ENCODE measurements at regions of chr3 and their contacts with region 1.

Region 1: DNA sequence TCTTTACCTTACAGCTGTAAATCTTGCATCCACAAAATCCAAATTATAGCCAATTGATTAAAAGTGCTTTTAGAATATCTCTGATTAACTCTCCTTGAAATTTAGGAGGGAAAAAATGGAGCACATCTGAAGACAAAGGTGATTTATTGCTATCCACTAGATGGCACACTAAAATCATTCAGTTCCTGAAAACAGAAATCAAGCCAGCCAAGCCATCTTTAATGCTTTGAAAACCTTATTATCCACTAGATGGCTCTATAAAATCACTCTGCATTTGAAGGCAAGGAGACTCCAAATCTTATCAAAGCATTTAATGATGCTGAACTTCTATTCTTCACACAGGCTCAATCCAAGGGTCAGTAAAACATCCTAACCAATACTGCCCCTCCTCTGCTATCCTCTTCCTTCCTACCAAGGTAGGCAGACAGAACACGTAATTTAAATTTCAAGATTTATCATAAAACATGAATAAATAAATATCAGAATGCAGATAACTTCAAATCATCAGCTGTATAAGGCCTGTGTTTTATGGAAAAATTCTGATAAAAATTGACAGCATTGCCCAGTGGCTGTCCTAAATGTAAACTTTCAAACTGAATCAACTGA is 48.4 kb downstream of the GOLIM4 start:
- DNase-seq: peak; percentile 89
- H3K4me3 ChIP-seq: no peak overlapping the region
- H3K27ac ChIP-seq: no peak overlapping the region
- H3K4me1 ChIP-seq: peaks cover 7% of the 10 kb centered on the region
- CTCF ChIP-seq: peak; percentile 100

Region 2: GRCh38 chr3:167941234-167941995 is 105.9 kb before region 1 on chr3:
- CTCF ChIA-PET with region 1: no interaction called
- POLR2A ChIA-PET with region 1: no interaction called
- intact Hi-C with region 1: no loop called
- DNase-seq: no peak
- H3K4me3 ChIP-seq: no peak overlapping the region
- H3K27ac ChIP-seq: no peak overlapping the region
- H3K4me1 ChIP-seq: no peaks in the 10 kb centered on the region
- CTCF ChIP-seq: no peak

Region 3: DNA sequence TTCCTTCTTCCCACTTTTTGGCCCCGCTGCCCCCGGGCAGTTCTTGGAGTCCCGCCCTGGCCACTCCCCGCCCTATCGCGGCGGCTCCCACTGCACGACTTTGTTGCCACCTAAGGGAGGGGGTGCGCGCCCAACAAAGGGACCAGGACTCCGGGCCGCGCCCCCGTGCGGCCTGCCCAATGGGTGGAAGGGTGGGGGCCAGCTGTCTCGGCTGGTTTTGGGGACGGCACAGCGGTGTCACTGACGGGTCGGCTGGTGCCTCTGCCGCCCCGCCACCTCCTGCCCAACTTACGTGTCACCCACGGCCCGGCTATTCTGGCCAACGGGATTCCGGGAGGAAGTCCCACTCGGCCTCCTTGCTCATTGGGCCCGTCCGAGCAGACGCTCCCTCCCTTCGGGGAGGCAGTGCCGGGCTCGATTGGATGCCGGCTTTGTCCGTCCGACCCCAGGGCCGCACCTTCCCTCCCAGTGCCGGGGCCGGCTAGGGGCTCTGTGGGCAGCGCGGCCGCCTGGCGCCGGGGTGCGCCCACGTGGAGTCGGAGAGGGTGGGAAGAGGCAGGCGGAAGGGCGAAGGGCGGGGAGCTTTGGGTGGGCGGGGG is 48.4 kb after region 1 on chr3 and contains the start of gene GOLIM4:
- CTCF ChIA-PET with region 1: no interaction called
- POLR2A ChIA-PET with region 1: interaction called, 11 read pairs
- intact Hi-C with region 1: loop called (anchors 1 kb)
- DNase-seq: peak; percentile 96
- H3K4me3 ChIP-seq: peak within 1 kb of the TSS; percentile 80
- H3K27ac ChIP-seq: peak within 1 kb of the TSS; percentile 84
- H3K4me1 ChIP-seq: peaks cover 31% of the 10 kb centered on the region
- CTCF ChIP-seq: peak; percentile 45; the same call in 1 of the 2 replicates
- total RNA-seq, gene GOLIM4: 31.2 and 42.6 TPM in 2 replicates

Region 4: DNA sequence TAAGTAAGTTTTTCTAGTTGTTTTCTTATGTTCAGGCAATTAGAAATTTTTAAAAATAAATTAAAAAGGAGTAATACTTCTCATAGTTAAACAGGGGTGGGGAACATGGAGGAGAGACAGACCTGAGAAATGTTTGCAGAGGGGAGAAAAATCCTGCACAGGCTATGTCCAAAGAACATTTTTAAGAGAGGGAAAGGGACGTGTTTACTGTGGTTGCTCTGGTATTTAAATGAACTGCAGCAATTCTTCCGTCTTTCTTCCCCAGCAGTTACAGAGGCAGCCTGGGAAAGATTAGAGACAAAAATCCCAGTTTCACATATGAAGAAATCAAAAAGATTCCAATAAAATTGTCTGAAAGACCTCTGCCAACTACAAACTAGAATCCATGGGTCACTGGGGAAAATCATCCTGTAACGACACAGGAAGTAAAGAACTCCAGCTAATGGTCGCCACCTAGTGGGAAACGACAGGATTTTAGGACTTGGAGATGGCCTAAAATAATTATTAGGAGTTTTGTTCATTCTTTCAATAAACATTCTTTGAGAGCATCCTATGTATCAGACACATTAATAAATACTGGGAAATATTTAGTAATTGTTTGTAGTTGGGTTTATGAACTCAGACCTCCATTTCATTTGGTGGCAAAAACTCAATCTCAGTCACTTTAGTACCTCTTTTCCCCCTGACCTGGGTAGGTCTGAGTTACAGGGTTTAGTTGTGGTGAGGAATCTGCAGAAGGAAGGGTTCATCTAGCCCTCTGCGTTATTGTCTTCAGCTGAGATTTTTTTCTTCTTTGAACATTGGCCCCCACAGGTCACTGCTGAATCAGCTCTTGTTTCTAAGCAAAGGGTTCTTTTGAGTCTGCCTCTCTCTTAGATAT is 118.3 kb after region 1 on chr3:
- CTCF ChIA-PET with region 1: interaction called, 3 read pairs
- POLR2A ChIA-PET with region 1: interaction called, 13 read pairs
- intact Hi-C with region 1: loop called (anchors 1 kb)
- DNase-seq: peak; percentile 84
- H3K4me3 ChIP-seq: peak overlapping the region; percentile 26
- H3K27ac ChIP-seq: peak overlapping the region; percentile 4
- H3K4me1 ChIP-seq: peaks cover 27% of the 10 kb centered on the region
- CTCF ChIP-seq: peak; percentile 96

Region 5: GRCh38 chr3:168506589-168506988 is 459.3 kb after region 1 on chr3:
- CTCF ChIA-PET with region 1: no interaction called
- POLR2A ChIA-PET with region 1: no interaction called
- intact Hi-C with region 1: loop called (anchors 5 kb)
- DNase-seq: no peak
- H3K4me3 ChIP-seq: no peak overlapping the region
- H3K27ac ChIP-seq: no peak overlapping the region
- H3K4me1 ChIP-seq: no peaks in the 10 kb centered on the region
- CTCF ChIP-seq: no peak

Region 6: GRCh38 chr3:168620826-168621225 is 573.5 kb after region 1 on chr3:
- CTCF ChIA-PET with region 1: no interaction called
- POLR2A ChIA-PET with region 1: no interaction called
- intact Hi-C with region 1: loop called (anchors 10 kb)
- DNase-seq: peak; percentile 32
- H3K4me3 ChIP-seq: no peak overlapping the region
- H3K27ac ChIP-seq: no peak overlapping the region
- H3K4me1 ChIP-seq: no peaks in the 10 kb centered on the region
- CTCF ChIP-seq: peak; percentile 75

Region 7: GRCh38 chr3:168847291-168847883 is 800.1 kb after region 1 on chr3:
- CTCF ChIA-PET with region 1: no interaction called
- POLR2A ChIA-PET with region 1: no interaction called
- intact Hi-C with region 1: loop called (anchors 2 kb)
- DNase-seq: peak; percentile 44
- H3K4me3 ChIP-seq: no peak overlapping the region
- H3K27ac ChIP-seq: no peak overlapping the region
- H3K4me1 ChIP-seq: no peaks in the 10 kb centered on the region
- CTCF ChIP-seq: peak; percentile 87